GM18951 (cell line): ENCODE measurements at regions of chr14 and their contacts with region 1.

Region 1: GRCh38 chr14:70972107-70972976 is 65.1 kb downstream of the PCNX1 start:
- POLR2A ChIP-seq: no peak

Region 2: DNA sequence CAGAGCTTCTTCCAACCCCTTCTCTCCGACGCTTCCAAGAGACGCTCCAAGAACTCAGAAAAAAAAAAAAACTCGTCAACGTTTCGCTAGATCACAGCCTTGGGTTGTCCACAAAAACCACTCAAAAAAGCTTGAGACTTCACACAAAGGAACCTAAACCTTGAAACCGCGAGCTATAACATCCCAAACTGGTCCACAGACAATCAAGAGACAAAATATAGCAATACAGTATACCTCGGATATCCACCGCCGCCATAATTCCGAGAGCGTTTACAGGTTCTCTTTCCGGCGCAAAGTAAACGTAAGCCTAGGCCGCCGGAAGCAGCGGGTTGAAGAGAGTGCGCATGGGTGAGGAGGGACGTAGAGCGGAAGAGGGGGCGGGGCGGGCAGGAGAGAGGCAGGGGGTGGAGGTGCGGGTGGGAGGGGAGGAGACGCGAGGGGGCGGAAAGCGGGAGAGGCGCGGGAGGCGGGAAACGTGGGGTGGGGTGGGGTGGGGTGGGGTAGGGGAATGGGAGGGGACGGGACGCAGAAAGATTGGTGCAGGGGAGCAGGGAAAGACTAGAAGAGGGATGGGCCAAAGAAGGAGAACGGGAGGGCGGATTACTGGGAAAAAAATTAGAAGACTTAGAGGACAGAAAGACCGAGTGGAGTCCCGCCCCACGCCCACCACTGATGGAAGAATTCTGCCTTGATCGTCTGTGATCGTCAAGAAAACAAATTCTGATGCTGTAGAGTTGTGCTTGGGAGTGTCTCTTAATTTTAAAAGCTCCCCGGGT is 371.8 kb before region 1 on chr14 and contains the start of gene MED6:
- in situ Hi-C with region 1: loop called (anchors 25 kb)
- POLR2A ChIP-seq: peak; percentile 62

Region 3: GRCh38 chr14:70714055-70714621 is 258.2 kb before region 1 on chr14:
- in situ Hi-C with region 1: loop called (anchors 25 kb)
- POLR2A ChIP-seq: no peak

Region 4: DNA sequence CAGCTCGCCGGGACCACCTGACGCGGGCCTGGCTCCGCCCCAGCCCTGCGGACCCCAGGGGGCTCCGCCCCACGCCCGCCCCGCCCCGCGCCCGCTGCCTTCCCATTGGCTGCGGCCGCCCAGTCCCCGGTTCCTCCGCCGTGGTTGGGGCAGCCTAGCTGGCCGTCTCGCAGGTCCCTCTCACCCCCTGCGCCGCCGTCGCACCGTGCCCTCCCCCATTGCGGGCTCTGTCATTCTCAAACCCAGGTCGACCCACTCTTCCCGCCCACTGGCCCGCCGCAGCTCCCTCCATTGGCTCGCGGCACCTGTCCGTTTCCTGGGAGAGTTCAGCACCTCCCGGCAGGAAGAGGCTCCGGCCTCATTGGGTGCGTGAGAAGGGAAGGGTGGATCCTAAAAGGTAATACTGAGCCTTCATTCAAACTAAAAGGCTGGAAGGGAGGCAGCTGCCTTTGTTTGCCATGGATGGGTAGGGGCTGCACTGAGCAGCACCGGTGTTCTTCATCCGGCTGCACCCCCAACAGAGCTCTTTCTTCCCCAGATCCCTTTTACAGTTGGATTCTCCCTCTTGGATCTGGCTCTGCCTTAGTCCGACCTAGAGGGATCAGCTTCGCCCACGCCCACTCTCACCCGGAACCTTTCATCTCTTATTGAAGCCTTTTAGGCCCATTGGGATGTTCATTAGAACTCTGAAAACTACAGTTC is 162.6 kb before region 1 on chr14:
- in situ Hi-C with region 1: loop called (anchors 10 kb)
- POLR2A ChIP-seq: peak; percentile 48